ENCODE measurements at regions of chr4 and their contacts with region 1.

Region 1: GRCh38 chr4:119041951-119042560 is 93.6 kb upstream of the MYOZ2 start:
- DNase-seq: peak; percentile 77
- ATAC-seq: peak; percentile 92
- H3K4me3 ChIP-seq: no peak overlapping the region
- H3K27ac ChIP-seq: 0 out of 2 replicates have a peak overlapping the region, but pooled peaks have one; percentile 9
- H3K4me1 ChIP-seq: peaks cover 4% of the 10 kb centered on the region; the same call in 1 of the 2 replicates
- H3K27me3 ChIP-seq: no peaks in the 10 kb centered on the region
- CTCF ChIP-seq: peak; percentile 74

Region 2: DNA sequence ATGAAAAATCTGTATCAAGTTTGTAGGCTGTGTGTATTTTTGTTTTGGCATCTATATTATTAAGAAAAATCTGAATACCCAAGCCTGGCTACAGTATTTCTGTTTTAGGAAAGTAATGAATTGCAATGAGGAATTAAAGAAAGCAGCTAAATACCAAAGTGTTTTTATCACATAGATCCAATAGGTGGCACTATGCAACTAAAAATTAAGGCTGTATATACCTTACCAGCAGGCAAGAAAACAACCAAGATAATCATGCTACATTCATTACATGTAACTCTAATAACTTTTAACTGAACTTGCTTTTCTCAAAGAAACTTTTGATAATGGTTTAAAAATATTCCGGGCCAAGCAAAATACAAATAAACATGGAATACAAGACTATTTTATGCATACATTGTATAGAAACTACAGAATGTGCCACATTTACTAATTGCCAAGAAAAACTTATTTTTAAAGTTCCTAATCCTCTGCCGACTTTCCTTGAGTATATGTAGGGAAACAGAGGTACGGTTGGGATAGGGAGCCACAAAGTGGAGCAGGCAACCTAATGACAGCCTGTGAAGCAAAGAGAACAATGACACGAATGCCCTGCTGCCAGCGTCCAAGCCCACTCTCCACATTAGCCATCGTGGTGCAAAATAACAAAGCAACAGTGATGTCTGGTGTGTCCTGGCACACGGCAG is 269.8 kb before region 1 on chr4:
- CTCF ChIA-PET with region 1: no interaction called
- POLR2A ChIA-PET with region 1: no interaction called
- intact Hi-C with region 1: no loop called
- DNase-seq: peak; percentile 58
- ATAC-seq: peak; percentile 71
- H3K4me3 ChIP-seq: no peak overlapping the region
- H3K27ac ChIP-seq: no peak overlapping the region
- H3K4me1 ChIP-seq: 0 out of 2 replicates have a peak, but pooled peaks cover 8% of the 10 kb centered on the region
- H3K27me3 ChIP-seq: no peaks in the 10 kb centered on the region
- CTCF ChIP-seq: peak; percentile 69

Region 3: DNA sequence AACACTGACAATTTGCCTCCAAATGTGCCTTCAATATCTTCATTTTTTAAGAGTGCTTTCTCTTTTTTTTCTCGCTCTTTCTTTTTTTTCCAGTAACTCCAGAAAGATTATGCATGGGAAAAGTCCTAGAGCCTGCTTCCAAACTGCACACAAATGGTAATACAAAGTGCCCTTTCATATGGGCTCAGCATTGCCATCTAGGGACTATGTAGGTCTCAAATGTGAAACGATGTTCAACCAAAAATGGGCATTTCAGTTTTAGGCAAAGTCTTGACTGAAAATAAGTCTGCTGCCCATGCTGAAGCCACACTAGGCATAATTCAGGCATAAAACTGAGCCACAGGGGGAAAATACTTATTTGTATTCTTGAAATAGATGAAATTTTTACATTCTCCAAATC is 87.8 kb before region 1 on chr4:
- CTCF ChIA-PET with region 1: no interaction called
- POLR2A ChIA-PET with region 1: no interaction called
- intact Hi-C with region 1: no loop called
- DNase-seq: peak; percentile 47
- ATAC-seq: peak; percentile 68
- H3K4me3 ChIP-seq: no peak overlapping the region
- H3K27ac ChIP-seq: no peak overlapping the region
- H3K4me1 ChIP-seq: peaks cover 7% of the 10 kb centered on the region; the same call in 1 of the 2 replicates
- H3K27me3 ChIP-seq: no peaks in the 10 kb centered on the region
- CTCF ChIP-seq: peak; percentile 54

Region 4: GRCh38 chr4:118989098-118990080 is 52.7 kb before region 1 on chr4:
- CTCF ChIA-PET with region 1: no interaction called
- POLR2A ChIA-PET with region 1: no interaction called
- intact Hi-C with region 1: loop called (anchors 2 kb)
- DNase-seq: peak; percentile 94
- ATAC-seq: peak; percentile 88
- H3K4me3 ChIP-seq: no peak overlapping the region
- H3K27ac ChIP-seq: peak overlapping the region; percentile 95
- H3K4me1 ChIP-seq: peaks cover 30% of the 10 kb centered on the region
- H3K27me3 ChIP-seq: no peaks in the 10 kb centered on the region
- CTCF ChIP-seq: no peak

Region 5: DNA sequence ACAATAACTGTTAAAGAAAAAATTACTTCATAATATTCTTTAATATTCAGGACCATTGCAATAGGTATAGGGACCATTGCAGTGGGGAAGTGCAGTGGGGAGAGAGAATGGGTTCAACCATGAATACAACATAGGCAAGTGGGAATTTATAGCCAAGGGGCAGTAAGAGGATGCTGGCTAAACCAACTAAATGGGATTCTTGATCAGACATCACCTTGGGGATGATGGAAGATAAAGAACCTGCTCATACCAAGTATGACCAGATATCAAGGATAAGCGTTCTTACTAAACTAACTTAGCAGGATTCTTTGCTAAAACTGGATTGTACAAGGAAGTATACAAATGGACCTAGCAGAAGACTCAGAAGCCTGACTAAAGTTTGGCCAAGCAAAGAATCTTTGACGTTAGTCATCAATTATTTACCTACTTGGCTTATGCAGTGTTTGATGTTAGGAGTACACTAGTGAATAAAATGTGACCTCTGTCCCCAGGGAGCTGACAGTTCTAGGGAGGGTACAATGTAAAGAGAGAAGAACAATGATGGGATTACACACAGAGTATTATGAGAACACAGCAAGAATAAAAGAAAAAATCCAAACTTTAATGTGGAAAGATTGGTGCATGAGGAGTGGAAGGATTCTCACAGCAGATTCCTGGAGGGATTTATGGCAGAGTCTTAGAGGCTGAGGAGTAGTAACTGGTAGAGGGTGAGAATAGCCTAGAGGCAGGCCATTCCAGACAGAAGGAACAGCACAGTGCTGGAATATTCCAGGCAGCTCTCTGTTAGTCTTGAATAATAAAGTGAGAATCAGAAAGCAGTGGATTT is 38.9 kb after region 1 on chr4:
- CTCF ChIA-PET with region 1: no interaction called
- POLR2A ChIA-PET with region 1: no interaction called
- intact Hi-C with region 1: loop called (anchors 5 kb)
- DNase-seq: peak; percentile 84
- ATAC-seq: peak; percentile 99
- H3K4me3 ChIP-seq: no peak overlapping the region
- H3K27ac ChIP-seq: peak overlapping the region; percentile 89
- H3K4me1 ChIP-seq: peaks cover 18% of the 10 kb centered on the region
- H3K27me3 ChIP-seq: no peaks in the 10 kb centered on the region
- CTCF ChIP-seq: no peak

Region 6: DNA sequence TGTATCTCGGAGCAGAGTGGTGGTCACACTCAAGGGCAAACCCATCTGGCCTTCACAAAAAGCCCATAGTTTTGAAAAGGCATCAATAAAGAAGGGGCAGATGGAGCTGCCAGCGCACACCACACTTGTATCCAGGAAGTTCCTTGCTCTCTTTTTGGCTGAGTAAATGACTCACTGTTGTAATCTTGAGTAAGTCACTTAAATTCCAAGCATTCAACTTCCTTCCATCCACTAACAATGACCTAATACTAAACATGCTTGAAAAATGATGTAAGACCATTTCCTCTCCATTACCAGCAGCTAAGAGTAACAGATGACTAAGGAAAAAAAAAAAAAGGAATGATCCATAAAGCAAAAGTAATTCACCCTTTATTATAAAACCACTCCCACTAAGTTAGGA is 61.2 kb after region 1 on chr4:
- CTCF ChIA-PET with region 1: no interaction called
- POLR2A ChIA-PET with region 1: no interaction called
- intact Hi-C with region 1: loop called (anchors 10 kb)
- DNase-seq: peak; percentile 87
- ATAC-seq: peak; percentile 77
- H3K4me3 ChIP-seq: no peak overlapping the region
- H3K27ac ChIP-seq: peak overlapping the region; percentile 77
- H3K4me1 ChIP-seq: peaks cover 42% of the 10 kb centered on the region
- H3K27me3 ChIP-seq: no peaks in the 10 kb centered on the region
- CTCF ChIP-seq: no peak

Region 7: DNA sequence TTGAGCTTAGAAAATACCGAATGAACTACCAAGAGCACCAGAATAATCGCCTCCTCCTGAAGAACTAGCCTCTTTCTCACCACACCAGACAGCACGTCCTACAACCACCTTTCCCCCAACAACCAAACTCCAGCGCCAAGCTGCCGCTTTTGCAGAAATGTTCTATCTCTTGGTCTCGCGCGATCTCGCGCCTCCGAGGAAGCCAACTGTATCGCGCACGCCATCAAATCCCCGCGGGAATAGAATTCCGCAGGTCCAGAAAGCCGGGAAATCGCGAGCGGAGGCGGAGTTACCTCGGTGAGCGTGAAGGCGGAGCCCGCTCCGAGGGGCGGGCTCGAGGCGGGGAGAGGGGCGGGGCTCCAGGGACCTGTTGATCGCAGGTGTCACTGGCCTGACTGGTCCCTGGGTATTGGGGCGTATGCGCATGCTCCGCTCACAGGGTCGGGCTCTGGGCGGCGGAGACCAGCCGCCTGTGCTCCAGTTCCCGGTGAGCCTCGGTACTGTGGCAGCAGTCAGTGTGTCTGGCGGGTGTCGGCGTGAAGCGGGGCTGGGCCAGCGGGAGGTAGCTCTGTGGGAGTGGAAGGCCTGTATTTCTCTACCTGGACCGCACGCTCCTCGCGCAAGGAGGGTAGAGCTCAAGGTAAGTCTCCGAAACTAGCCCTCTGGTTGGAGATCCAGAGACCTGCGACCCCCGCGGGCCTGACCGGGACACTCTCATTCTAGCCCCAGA is 170.3 kb after region 1 on chr4 and contains the start of gene USP53:
- CTCF ChIA-PET with region 1: no interaction called
- POLR2A ChIA-PET with region 1: no interaction called
- intact Hi-C with region 1: loop called (anchors 1 kb)
- DNase-seq: peak; percentile 97
- ATAC-seq: peak; percentile 84
- H3K4me3 ChIP-seq: peak within 1 kb of the TSS; percentile 89
- H3K27ac ChIP-seq: peak within 1 kb of the TSS; percentile 79
- H3K4me1 ChIP-seq: peaks cover 28% of the 10 kb centered on the region
- H3K27me3 ChIP-seq: no peaks in the 10 kb centered on the region
- CTCF ChIP-seq: no peak
- total RNA-seq, gene USP53: 8.7 and 9.6 TPM in 2 replicates

Region 8: GRCh38 chr4:119286377-119287002 is 244.4 kb after region 1 on chr4:
- CTCF ChIA-PET with region 1: no interaction called
- POLR2A ChIA-PET with region 1: no interaction called
- intact Hi-C with region 1: loop called (anchors 5 kb)
- DNase-seq: peak; percentile 62
- ATAC-seq: no peak
- H3K4me3 ChIP-seq: no peak overlapping the region
- H3K27ac ChIP-seq: no peak overlapping the region
- H3K4me1 ChIP-seq: 0 out of 2 replicates have a peak, but pooled peaks cover 7% of the 10 kb centered on the region
- H3K27me3 ChIP-seq: no peaks in the 10 kb centered on the region
- CTCF ChIP-seq: peak; percentile 65